ENCODE measurements at regions of chr2 and their contacts with region 1.

Region 1: DNA sequence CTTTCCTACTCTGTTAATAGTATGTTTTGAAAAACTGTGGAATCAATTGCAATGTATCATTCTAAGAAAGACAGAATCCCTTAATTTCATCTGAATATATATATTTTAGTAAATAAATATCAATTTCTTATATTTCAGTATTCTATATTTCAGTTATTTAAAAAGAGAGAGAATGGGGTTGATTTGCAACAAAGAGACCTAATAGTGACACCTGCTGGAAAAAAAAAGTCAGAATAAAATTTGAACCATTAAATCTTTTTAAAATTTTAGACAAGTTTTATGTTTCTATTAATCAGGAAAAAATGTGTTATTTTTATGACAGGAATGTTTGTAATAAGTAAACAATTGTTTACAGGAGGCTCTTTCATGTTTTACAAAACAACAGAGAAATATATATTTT is 20.7 kb upstream of the CCNT2 start:
- DNase-seq: no peak
- H3K4me3 ChIP-seq: no peak overlapping the region
- H3K4me3 Mint-ChIP-seq: no peak overlapping the region
- H3K27ac Mint-ChIP-seq: no peak overlapping the region
- H3K4me1 ChIP-seq: no peaks in the 10 kb centered on the region
- H3K4me1 Mint-ChIP-seq: peaks cover under 1% of the 10 kb centered on the region
- H3K27me3 ChIP-seq: no peaks in the 10 kb centered on the region
- H3K27me3 Mint-ChIP-seq: no peaks in the 10 kb centered on the region
- CTCF ChIP-seq: peak; percentile 31 to 45

Region 2: GRCh38 chr2:134460583-134460998 is 437.3 kb before region 1 on chr2:
- CTCF ChIA-PET with region 1: no interaction called
- POLR2A ChIA-PET with region 1: no interaction called
- intact Hi-C with region 1: loop called (anchors 1 kb)
- DNase-seq: peak; percentile 76
- H3K4me3 ChIP-seq: no peak overlapping the region
- H3K4me3 Mint-ChIP-seq: no peak overlapping the region
- H3K27ac Mint-ChIP-seq: no peak overlapping the region
- H3K4me1 ChIP-seq: no peaks in the 10 kb centered on the region
- H3K4me1 Mint-ChIP-seq: no peaks in the 10 kb centered on the region
- H3K27me3 ChIP-seq: no peaks in the 10 kb centered on the region
- H3K27me3 Mint-ChIP-seq: no peaks in the 10 kb centered on the region
- CTCF ChIP-seq: peak; percentile 78 to 88

Region 3: GRCh38 chr2:134466141-134466540 is 431.8 kb before region 1 on chr2:
- CTCF ChIA-PET with region 1: no interaction called
- POLR2A ChIA-PET with region 1: no interaction called
- intact Hi-C with region 1: loop called (anchors 1 kb)
- DNase-seq: peak; percentile 62 to 68
- H3K4me3 ChIP-seq: no peak overlapping the region
- H3K4me3 Mint-ChIP-seq: no peak overlapping the region
- H3K27ac Mint-ChIP-seq: no peak overlapping the region
- H3K4me1 ChIP-seq: no peaks in the 10 kb centered on the region
- H3K4me1 Mint-ChIP-seq: no peaks in the 10 kb centered on the region
- H3K27me3 ChIP-seq: no peaks in the 10 kb centered on the region
- H3K27me3 Mint-ChIP-seq: no peaks in the 10 kb centered on the region
- CTCF ChIP-seq: peak; percentile 66 to 83

Region 4: DNA sequence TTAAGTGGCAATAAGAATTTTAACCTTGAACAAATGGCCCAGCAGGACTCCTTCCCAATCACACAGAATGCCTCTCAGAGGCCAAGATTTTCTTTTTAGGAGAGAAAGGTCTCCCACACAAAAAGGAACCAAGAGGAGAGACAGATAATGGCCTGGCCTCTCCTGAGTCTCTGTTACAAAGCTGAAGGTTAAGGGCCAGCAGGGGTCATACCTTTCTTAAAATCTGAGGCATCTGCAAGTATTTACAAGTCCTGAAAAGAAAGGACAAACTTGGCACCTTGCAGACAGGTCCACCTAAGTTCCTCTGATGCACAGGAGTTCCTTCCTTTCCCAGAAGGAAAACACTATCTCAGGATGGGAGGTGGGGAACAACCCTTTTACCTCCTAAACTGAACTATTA is 321.5 kb before region 1 on chr2:
- CTCF ChIA-PET with region 1: no interaction called
- POLR2A ChIA-PET with region 1: no interaction called
- intact Hi-C with region 1: loop called (anchors 1 kb)
- DNase-seq: no peak
- H3K4me3 ChIP-seq: no peak overlapping the region
- H3K4me3 Mint-ChIP-seq: no peak overlapping the region
- H3K27ac Mint-ChIP-seq: no peak overlapping the region
- H3K4me1 ChIP-seq: no peaks in the 10 kb centered on the region
- H3K4me1 Mint-ChIP-seq: no peaks in the 10 kb centered on the region
- H3K27me3 ChIP-seq: no peaks in the 10 kb centered on the region
- H3K27me3 Mint-ChIP-seq: no peaks in the 10 kb centered on the region
- CTCF ChIP-seq: no peak